ENCODE measurements at regions of chr1 and their contacts with region 1.

Region 1: DNA sequence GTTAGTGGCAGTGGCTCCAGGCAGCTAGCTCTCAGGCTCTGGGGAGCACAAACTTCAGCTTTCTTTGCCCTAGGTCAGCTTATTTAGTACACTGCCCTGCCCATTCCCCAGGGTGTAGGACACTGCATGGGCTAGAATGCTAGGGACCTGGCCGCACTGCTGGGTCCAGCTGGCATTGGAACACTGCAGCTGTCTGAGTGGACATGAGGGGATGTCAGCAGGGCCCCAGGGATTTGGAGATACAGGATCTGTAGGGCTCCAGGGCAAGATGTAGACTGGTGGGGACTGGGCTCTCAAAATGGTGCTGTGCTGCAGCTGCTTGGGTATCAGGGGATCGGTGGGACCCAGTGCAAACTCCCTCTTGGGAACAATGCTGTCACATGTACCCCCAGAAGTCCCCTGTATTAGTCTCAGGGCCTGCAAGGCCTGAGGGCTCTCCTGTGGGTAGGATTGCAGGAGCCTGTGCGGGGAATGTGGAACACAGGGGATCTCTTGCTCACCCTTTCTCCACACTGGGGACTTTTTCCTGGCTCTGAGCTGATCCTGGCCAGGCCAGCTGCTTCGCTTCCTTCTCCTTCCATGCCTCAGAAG is 25.2 kb upstream of the TTC22 start:
- DNase-seq: no peak
- ATAC-seq: no peak
- H3K4me3 ChIP-seq: no peak overlapping the region
- H3K27ac ChIP-seq: no peak overlapping the region
- H3K4me1 ChIP-seq: no peaks in the 10 kb centered on the region
- H3K27me3 ChIP-seq: peaks cover 0 to 2% of the 10 kb centered on the region in 2 experiments; a peak in 1 of 5 replicates
- CTCF ChIP-seq: no peak
- EP300 ChIP-seq: no peak
- POLR2A ChIP-seq: no peak
- RAD21 ChIP-seq: no peak

Region 2: GRCh38 chr1:54927472-54928240 is 101.3 kb after region 1 on chr1:
- CTCF ChIA-PET with region 1: no interaction called
- POLR2A ChIA-PET with region 1: no interaction called
- in situ Hi-C with region 1: no loop called
- intact Hi-C with region 1: loop called (anchors 10 kb)
- DNase-seq: peak in 2 of 4 experiments; percentile 20 to 63
- ATAC-seq: peak; percentile 50; the same call in 1 of the 3 replicates
- H3K4me3 ChIP-seq: no peak overlapping the region
- H3K27ac ChIP-seq: no peak overlapping the region
- H3K4me1 ChIP-seq: peaks cover 0 to 7% of the 10 kb centered on the region in 2 experiments; a peak in 3 of 5 replicates
- H3K27me3 ChIP-seq: peaks cover 9 to 22% of the 10 kb centered on the region in 2 experiments; a peak in 4 of 5 replicates
- CTCF ChIP-seq: no peak
- EP300 ChIP-seq: peak; percentile 45; the same call in 1 of the 2 replicates
- POLR2A ChIP-seq: no peak
- RAD21 ChIP-seq: no peak

Measured in K562 (cell line).